Transverse colon (tissue), 4 donors: ENCODE measurements at regions of chr12 and their contacts with region 1.

Region 1: GRCh38 chr12:98653866-98654493 is 8.9 kb downstream of the APAF1 start:
- DNase-seq: no peak
- H3K4me3 ChIP-seq: no peak overlapping the region
- H3K27ac ChIP-seq: no peak overlapping the region
- H3K4me1 ChIP-seq: no peaks in the 10 kb centered on the region
- H3K27me3 ChIP-seq: no peaks in the 10 kb centered on the region
- CTCF ChIP-seq: peak; percentile 45 to 64 (median 56)
- EP300 ChIP-seq: no peak
- POLR2A ChIP-seq: no peak

Region 2: GRCh38 chr12:98559666-98560065 is 94.3 kb before region 1 on chr12:
- in situ Hi-C with region 1: loop called in 2 of 4 experiments (anchors 10 to 25 kb)
- intact Hi-C with region 1: no loop called
- DNase-seq: no peak
- H3K4me3 ChIP-seq: no peak overlapping the region
- H3K27ac ChIP-seq: no peak overlapping the region
- H3K4me1 ChIP-seq: no peaks in the 10 kb centered on the region
- H3K27me3 ChIP-seq: no peaks in the 10 kb centered on the region
- CTCF ChIP-seq: no peak
- EP300 ChIP-seq: no peak
- POLR2A ChIP-seq: no peak

Region 3: GRCh38 chr12:98572010-98572409 is 82.0 kb before region 1 on chr12:
- in situ Hi-C with region 1: loop called in 3 of 4 experiments (anchors 5 to 25 kb)
- intact Hi-C with region 1: loop called (anchors 5 kb)
- DNase-seq: no peak
- H3K4me3 ChIP-seq: no peak overlapping the region
- H3K27ac ChIP-seq: no peak overlapping the region
- H3K4me1 ChIP-seq: peaks cover 0 to 21% (median 3%) of the 10 kb centered on the region in 4 donors
- H3K27me3 ChIP-seq: no peaks in the 10 kb centered on the region
- CTCF ChIP-seq: peak in 2 of 5 experiments; percentile 22 to 23
- EP300 ChIP-seq: no peak
- POLR2A ChIP-seq: no peak